ENCODE measurements at regions of chr1 and their contacts with region 1.

Region 1: GRCh38 chr1:61077676-61078541 is 4.5 kb upstream of the NFIA start:
- DNase-seq: peak; percentile 97
- ATAC-seq: peak; percentile 69

Region 2: DNA sequence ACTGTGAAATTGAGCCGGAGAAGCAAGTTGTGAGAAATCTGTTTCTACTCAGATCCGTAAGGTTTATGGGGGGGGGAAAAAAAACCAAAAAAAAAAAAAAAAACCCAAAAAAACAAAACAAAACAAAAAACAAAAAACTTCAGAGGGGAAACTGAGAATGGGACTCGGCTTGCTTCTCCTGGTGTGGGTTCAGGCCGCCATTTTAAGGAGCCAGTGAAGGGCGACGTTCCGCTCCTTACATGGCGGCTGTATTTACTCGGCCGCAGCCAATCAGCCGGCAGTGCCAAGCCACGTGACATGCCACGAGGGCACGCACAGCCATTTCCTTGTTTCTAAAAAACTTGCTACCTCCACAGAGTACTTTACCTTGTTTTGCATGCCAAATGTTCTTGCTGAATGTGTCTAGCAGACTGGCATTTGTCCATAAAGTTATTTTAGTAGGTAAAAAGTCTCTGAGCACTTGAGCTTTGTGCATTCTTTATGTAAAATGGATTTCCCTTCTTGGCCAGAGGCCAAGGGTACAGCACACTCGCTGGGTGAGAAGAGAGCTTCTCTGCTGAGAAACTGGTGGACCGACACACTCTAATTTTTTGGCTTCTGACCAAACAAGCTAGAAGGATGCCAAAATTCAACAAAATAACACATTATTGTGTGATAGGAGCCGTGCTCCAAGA is 106.3 kb after region 1 on chr1:
- intact Hi-C with region 1: loop called in 1 of 2 experiments (anchors 10 kb)
- DNase-seq: peak; percentile 86 to 94
- ATAC-seq: peak; percentile 92

Region 3: GRCh38 chr1:61238371-61238689 is 160.4 kb after region 1 on chr1:
- intact Hi-C with region 1: loop called in 1 of 2 experiments (anchors 10 kb)
- DNase-seq: no peak
- ATAC-seq: no peak

Region 4: DNA sequence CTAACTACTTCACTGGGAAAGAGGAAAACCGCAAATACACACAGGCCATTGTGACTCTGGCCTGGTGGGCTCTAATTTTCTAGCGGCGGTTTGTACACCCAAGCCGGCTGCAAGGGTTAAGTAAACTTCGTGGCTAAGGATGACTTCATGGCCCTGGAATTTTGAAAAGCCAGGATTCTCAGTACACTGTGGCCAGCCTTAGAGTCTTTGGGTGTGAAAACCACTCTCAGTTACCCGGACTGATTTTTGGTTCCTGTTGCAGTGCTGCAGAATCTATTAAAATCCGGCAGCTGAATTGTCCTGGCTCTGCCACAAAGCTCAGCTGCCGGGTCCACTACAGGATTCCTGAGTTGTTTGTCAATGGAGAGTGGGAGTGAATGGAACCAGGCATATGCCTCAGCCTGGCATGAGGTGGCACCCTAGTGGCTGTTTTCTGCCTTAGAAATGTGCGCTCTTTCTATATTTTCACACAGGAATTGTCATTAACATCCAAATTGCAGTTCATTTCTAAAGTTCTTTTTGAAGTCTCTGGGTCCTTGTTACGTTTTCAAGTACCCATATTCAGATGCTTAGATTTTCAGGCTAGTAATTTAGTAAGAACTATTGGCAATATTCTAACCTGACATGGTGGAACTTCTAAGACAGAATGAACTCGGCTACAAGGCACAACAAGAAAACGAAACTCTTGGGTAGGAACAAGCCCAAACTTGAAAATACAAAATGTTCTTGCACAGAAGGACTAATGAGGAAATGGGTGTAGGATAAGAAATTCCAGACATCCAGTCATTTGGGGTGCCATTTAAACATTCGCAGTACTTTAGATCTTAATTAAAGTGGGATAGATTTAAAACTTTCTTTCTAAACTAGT is 260.3 kb after region 1 on chr1:
- intact Hi-C with region 1: loop called in 1 of 2 experiments (anchors 10 kb)
- DNase-seq: peak; percentile 55 to 63
- ATAC-seq: peak; percentile 98

Region 5: DNA sequence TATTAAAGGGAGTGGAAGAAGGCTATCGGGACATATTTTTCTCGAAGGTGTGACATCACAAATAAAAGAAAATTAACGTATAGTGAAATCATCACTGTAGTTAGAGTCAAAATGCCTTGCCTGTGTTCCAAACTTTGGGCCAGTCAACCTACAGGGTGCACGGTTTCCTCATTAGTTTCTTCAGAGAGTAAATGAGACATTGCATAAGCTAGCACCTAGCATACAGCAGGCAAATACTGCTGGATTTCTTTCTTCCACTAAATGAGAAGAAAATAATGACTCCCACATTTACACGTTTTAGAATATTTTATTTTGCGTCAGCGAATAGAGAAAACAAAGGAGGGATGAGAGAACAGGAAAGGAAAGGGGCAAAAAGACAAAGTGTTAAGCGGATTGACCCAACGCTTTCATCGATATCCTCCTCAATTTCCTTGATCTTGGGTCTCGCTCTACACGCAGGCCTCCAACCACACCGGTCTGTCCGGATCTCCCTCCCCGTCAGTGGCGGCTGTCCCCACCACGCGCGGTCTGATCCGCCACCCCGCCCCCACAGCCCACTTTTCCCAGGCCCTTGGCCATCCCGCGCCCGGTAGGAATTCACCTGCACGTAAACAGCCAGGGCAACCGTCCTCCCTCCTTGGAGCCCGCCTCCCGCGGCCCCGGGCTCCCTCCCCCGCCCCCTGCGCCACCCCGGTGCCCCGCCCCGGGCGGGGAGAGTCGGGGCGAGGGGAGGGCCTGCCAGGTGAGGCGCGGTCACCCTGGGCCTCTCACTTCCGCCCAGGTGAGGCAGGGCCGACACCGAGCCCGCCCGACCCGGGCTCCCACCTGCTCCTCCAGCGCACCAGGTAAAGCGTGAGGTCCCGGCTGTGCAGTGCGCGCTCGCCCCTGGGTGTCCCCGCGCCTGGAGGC is 664.1 kb after region 1 on chr1 and contains the start of gene PATJ:
- intact Hi-C with region 1: no loop called
- DNase-seq: peak; percentile 87 to 88
- ATAC-seq: peak; percentile 94
- total RNA-seq, gene PATJ: 68.8 to 95.2 TPM